ENCODE measurements at regions of chr18 and their contacts with region 1.

Region 1: GRCh38 chr18:48030616-48031480 is 100.4 kb upstream of the SMAD2 start:
- DNase-seq: no peak
- ATAC-seq: peak; percentile 86

Region 2: GRCh38 chr18:47701133-47701532 is 329.7 kb before region 1 on chr18:
- intact Hi-C with region 1: no loop called
- DNase-seq: no peak
- ATAC-seq: no peak

Region 3: DNA sequence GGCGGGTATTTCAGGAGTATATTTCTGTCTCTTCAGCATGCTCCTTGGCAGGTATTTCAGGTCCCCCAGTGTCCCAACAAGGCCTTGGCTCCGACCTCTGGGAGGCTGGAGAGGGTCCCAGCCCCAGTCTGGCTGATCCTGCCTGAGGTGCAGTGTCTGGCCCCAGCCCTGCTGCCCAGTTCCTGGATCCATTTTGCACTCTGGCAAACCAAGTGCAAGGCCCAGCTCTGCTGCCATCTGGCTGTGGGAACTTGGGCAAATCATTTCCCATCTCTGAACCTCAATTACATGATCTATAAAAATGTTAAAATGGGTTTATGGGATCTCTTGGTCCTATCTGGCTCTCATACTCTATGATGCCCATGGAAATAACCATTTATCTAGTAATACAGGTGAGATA is 314.7 kb after region 1 on chr18:
- intact Hi-C with region 1: loop called (anchors 10 kb)
- DNase-seq: no peak
- ATAC-seq: peak; percentile 29

Region 4: GRCh38 chr18:48356811-48357631 is 326.2 kb after region 1 on chr18:
- intact Hi-C with region 1: no loop called
- DNase-seq: no peak
- ATAC-seq: no peak

Region 5: GRCh38 chr18:48445540-48445939 is 414.7 kb after region 1 on chr18:
- intact Hi-C with region 1: loop called (anchors 5 kb)
- DNase-seq: peak; percentile 67
- ATAC-seq: peak; percentile 77